ENCODE measurements at regions of chr6 and their contacts with region 1.

Region 1: GRCh38 chr6:34161857-34162515 is 16.1 kb upstream of the GRM4 start:
- DNase-seq: no peak
- H3K4me3 ChIP-seq: no peak overlapping the region
- H3K27ac ChIP-seq: no peak overlapping the region
- H3K4me1 ChIP-seq: no peaks in the 10 kb centered on the region
- H3K27me3 ChIP-seq: no peaks in the 10 kb centered on the region
- CTCF ChIP-seq: no peak
- POLR2A ChIP-seq: no peak

Region 2: DNA sequence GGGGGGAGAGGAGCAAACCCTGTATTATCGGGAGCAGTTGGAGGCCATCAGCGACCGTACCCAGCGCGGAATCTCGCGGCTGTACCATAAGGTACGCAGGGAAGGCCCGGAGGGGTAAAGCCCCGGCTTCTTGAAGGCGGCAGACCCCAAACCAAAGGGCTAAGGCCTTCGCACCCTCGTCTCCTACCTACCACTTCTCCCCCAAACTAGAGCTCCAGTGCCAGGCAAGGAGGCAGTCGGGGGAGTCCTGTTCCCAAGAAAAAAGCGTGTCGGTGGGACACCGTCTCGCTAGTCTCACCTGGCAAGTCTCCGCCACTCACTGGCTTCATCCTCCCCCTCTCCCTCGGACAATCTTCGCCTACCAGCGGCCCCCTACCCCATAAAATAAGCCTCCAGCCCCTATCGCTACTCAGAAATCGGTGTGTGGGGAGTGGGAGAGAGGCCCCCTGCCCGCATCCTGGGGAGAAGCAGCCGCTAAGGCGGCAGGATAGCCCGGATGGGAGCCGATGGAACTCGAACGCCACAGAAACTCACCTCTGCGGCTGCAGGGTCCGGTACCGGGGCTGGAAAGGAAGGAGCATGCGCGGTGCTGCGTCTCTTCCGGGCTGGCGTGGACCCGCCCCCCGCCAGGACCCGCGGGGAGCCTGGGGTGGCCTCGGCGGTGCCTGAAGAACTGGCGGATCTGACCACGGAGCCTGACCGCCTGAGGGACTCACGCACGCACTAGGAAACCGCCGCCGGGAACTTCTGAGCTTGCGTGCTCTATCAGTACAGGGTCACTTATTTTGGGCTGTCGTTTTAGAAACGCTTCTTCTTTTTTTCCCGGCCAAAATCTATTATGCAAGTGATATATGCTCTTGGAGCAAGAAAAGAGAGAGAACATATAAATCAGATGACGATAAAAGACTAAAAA is 263.8 kb after region 1 on chr6 and contains the start of gene RPS10:
- CTCF ChIA-PET with region 1: interaction called, 14 read pairs
- POLR2A ChIA-PET with region 1: no interaction called
- dilution Hi-C with region 1: no loop called
- intact Hi-C with region 1: no loop called
- DNase-seq: peak; percentile 96
- H3K4me3 ChIP-seq: peak within 1 kb of the TSS; percentile 66 to 95 (median 90)
- H3K27ac ChIP-seq: peak within 1 kb of the TSS; percentile 79
- H3K4me1 ChIP-seq: peaks cover 15% of the 10 kb centered on the region
- H3K27me3 ChIP-seq: no peaks in the 10 kb centered on the region
- CTCF ChIP-seq: no peak
- POLR2A ChIP-seq: peak; percentile 91
- total RNA-seq, gene RPS10: 1,295 and 1,416 TPM in 2 replicates